Activated T-helper 1 cell treated with anti-CD3 and anti-CD28 coated beads, Interleukin-12 subunit alpha, Interleukin-12 subunit beta, Interleukin-2, Interleukin-4 antibody, amounts not matched to agents 30 ng/mL and 10 ng/mL and 1 ng/mL, durations not matched to agents 14 hours and 24 hours and 36 hours (primary cell): ENCODE measurements at regions of chr16 and their contacts with region 1.

Region 1: GRCh38 chr16:29815793-29816693 is at the start of gene PAGR1:
- DNase-seq: peak; percentile 99
- H3K4me3 Mint-ChIP-seq: peak within 1 kb of the TSS; percentile 94
- H3K27ac Mint-ChIP-seq: peak within 1 kb of the TSS; percentile 98
- H3K4me1 Mint-ChIP-seq: peaks cover 48% of the 10 kb centered on the region
- H3K27me3 Mint-ChIP-seq: no peaks in the 10 kb centered on the region
- total RNA-seq, gene PAGR1: 29.2 and 30.8 TPM in 2 replicates

Region 2: GRCh38 chr16:29757950-29758466 is 58.0 kb before region 1 on chr16:
- intact Hi-C with region 1: no loop called
- DNase-seq: no peak
- H3K4me3 Mint-ChIP-seq: no peak overlapping the region
- H3K27ac Mint-ChIP-seq: no peak overlapping the region
- H3K4me1 Mint-ChIP-seq: peaks cover 9% of the 10 kb centered on the region
- H3K27me3 Mint-ChIP-seq: peaks cover 3% of the 10 kb centered on the region

Region 3: GRCh38 chr16:30024451-30024850 is 208.4 kb after region 1 on chr16:
- intact Hi-C with region 1: loop called (anchors 5 kb)
- DNase-seq: no peak
- H3K4me3 Mint-ChIP-seq: no peak overlapping the region
- H3K27ac Mint-ChIP-seq: no peak overlapping the region
- H3K4me1 Mint-ChIP-seq: peaks cover 13% of the 10 kb centered on the region
- H3K27me3 Mint-ChIP-seq: peaks cover 31% of the 10 kb centered on the region